ENCODE measurements at regions of chr16 and their contacts with region 1.

Region 1: GRCh38 chr16:65671-66137 is 6.7 kb downstream of the RHBDF1 start:
- DNase-seq: peak; percentile 87 to 96 (median 94)
- ATAC-seq: peak; percentile 57 to 62
- H3K4me3 ChIP-seq: no peak overlapping the region
- H3K27ac ChIP-seq: no peak overlapping the region
- H3K4me1 ChIP-seq: peaks cover 6% of the 10 kb centered on the region
- H3K27me3 ChIP-seq: no peaks in the 10 kb centered on the region

Region 2: GRCh38 chr16:96935-97381 is 31.3 kb after region 1 on chr16:
- intact Hi-C with region 1: loop called (anchors 2 kb)
- DNase-seq: peak; percentile 90 to 96 (median 95)
- ATAC-seq: peak; percentile 76 to 77
- H3K4me3 ChIP-seq: no peak overlapping the region
- H3K27ac ChIP-seq: no peak overlapping the region
- H3K4me1 ChIP-seq: peaks cover 7% of the 10 kb centered on the region
- H3K27me3 ChIP-seq: no peaks in the 10 kb centered on the region

Measured in right cardiac atrium (tissue), 5 donors.